ENCODE measurements at regions of chr2 and their contacts with region 1.

Region 1: DNA sequence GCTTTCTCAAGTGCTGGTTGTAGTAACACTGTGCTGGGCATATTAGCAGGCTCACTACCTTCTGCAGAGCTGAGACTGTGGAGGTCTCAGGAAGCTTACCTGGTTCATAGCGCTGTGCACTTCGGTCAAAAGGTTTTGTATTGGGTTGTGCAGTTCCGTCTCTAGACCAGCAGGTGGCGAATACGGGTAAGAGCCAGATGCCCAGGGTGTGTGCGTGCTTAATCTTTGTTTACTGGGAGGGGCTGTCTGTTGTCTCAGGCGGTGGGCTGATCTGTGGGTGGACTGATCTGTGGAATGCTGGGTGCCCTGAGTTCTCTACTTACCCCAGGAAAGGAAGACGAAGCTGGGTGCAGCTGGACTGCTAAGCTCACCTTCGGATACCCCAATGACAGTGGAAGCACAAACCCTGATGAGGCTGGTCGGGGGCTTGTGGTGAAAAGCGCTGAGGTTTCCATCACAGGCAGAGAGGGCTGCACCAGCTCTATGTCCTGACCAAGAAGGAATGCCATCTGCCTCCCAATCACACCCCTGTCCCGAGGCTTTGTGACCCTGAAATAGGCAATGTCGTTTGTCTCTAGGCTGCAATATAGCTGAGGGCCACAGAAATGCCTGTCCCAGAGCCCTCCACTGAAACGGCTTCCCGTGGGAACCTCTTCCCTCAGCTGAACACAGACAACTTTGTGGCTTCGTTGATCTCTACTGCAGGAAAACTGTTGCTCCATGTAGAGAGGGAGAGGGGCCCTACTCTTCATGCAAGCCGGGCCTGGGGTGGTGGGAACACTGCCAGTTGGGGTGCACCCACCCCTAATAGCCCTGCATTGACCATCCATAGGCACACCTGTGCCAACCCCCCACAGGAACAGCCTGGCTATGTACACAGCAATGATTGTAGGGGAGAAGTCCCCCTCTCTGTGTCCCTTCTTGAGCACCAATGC is 45.9 kb upstream of the FAM117B start:
- DNase-seq: peak; percentile 41 to 87 (median 68)
- ATAC-seq: peak; percentile 99
- H3K4me3 ChIP-seq: no peak overlapping the region
- H3K4me3 Mint-ChIP-seq: no peak overlapping the region
- H3K27ac ChIP-seq: no peak overlapping the region
- H3K27ac Mint-ChIP-seq: no peak overlapping the region
- H3K4me1 ChIP-seq: peaks cover 4% of the 10 kb centered on the region
- H3K4me1 Mint-ChIP-seq: peaks cover 11% of the 10 kb centered on the region
- H3K27me3 ChIP-seq: no peaks in the 10 kb centered on the region
- H3K27me3 Mint-ChIP-seq: no peaks in the 10 kb centered on the region
- CTCF ChIP-seq: peak; percentile 80

Region 2: DNA sequence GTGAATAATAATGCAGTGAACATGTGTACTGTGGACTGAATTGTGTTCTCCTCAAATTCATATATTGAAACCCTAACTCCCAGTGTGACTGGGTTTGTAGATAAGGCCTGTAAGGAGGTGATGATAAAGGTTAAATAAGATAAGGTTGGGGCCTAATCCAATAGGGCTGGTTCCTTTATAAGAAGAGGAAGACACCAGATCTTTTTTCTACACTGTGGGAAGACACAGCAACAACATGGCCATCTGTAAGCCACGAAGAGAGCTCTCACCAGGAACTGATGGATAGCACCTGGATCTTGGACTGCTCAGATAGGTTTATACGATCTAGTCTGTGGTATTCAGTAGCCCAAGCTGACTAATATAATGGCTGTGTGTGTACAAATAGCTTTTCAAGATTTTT is 146.0 kb before region 1 on chr2:
- CTCF ChIA-PET with region 1: no interaction called
- POLR2A ChIA-PET with region 1: no interaction called
- intact Hi-C with region 1: no loop called
- DNase-seq: no peak
- ATAC-seq: no peak
- H3K4me3 ChIP-seq: no peak overlapping the region
- H3K4me3 Mint-ChIP-seq: no peak overlapping the region
- H3K27ac ChIP-seq: no peak overlapping the region
- H3K27ac Mint-ChIP-seq: no peak overlapping the region
- H3K4me1 ChIP-seq: no peaks in the 10 kb centered on the region
- H3K4me1 Mint-ChIP-seq: peaks cover 2% of the 10 kb centered on the region
- H3K27me3 ChIP-seq: no peaks in the 10 kb centered on the region
- H3K27me3 Mint-ChIP-seq: no peaks in the 10 kb centered on the region
- CTCF ChIP-seq: no peak

Region 3: DNA sequence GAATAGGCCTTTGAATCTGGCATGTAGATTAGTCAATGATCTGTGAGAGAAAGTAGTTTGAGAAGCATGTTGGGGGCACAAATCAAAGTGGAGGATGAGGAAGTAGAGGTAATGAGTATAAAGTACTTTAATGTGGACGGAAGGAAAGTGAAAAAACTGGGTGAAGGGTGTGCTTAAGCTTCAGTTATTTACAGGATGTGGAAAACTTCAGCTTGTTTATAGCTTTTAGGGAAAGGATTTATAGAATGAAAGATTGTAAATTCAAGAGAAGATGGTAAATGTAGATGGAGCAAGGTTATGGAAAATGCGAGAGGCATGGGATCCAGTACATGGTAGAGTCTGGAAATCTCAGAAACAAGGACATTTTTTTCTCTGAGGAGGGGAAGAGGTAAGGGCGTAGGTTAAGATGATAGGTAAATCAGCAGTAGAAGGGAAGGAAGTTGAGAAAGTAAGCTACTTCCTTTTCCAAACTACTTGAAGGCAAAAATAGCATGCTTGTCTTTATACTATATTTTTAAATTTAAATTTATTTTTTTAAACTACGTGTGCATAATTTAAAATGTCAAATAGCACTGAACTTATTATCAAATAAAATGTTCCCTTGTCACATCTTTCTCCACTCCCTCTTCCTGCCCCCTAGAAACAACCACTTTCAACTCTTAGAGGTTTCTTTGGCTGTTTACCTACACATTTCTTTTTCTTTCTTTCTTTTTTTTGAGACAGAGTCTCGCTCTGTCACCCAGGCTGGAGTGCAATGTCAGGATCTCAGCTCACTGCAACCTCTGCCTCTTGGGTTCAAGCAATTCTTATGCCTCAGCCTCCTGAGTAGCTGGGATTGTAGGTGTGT is 54.3 kb after region 1 on chr2:
- CTCF ChIA-PET with region 1: interaction called, 7 read pairs
- POLR2A ChIA-PET with region 1: no interaction called
- intact Hi-C with region 1: loop called in 1 of 2 experiments (anchors 2 kb)
- DNase-seq: peak in 4 of 9 experiments; percentile 9 to 81 (median 40)
- ATAC-seq: peak; percentile 75
- H3K4me3 ChIP-seq: peak overlapping the region; percentile 2 to 30
- H3K4me3 Mint-ChIP-seq: peak overlapping the region; percentile 76
- H3K27ac ChIP-seq: peak overlapping the region; percentile 38 to 83
- H3K27ac Mint-ChIP-seq: no peak overlapping the region
- H3K4me1 ChIP-seq: peaks cover 75% of the 10 kb centered on the region
- H3K4me1 Mint-ChIP-seq: peaks cover 61% of the 10 kb centered on the region
- H3K27me3 ChIP-seq: no peaks in the 10 kb centered on the region
- H3K27me3 Mint-ChIP-seq: no peaks in the 10 kb centered on the region
- CTCF ChIP-seq: no peak

Region 4: GRCh38 chr2:202762556-202762955 is 173.6 kb after region 1 on chr2:
- CTCF ChIA-PET with region 1: interaction called, 4 read pairs
- POLR2A ChIA-PET with region 1: no interaction called
- intact Hi-C with region 1: loop called (anchors 1 to 5 kb)
- DNase-seq: peak in 3 of 9 experiments; percentile 16 to 73 (median 45)
- ATAC-seq: peak; percentile 82
- H3K4me3 ChIP-seq: peak overlapping the region in 1 of 2 experiments; percentile 25
- H3K4me3 Mint-ChIP-seq: peak overlapping the region; percentile 62
- H3K27ac ChIP-seq: peak overlapping the region; percentile 31 to 33
- H3K27ac Mint-ChIP-seq: peak overlapping the region; percentile 91
- H3K4me1 ChIP-seq: peaks cover 68% of the 10 kb centered on the region
- H3K4me1 Mint-ChIP-seq: peaks cover 44% of the 10 kb centered on the region
- H3K27me3 ChIP-seq: no peaks in the 10 kb centered on the region
- H3K27me3 Mint-ChIP-seq: no peaks in the 10 kb centered on the region
- CTCF ChIP-seq: no peak

Region 5: DNA sequence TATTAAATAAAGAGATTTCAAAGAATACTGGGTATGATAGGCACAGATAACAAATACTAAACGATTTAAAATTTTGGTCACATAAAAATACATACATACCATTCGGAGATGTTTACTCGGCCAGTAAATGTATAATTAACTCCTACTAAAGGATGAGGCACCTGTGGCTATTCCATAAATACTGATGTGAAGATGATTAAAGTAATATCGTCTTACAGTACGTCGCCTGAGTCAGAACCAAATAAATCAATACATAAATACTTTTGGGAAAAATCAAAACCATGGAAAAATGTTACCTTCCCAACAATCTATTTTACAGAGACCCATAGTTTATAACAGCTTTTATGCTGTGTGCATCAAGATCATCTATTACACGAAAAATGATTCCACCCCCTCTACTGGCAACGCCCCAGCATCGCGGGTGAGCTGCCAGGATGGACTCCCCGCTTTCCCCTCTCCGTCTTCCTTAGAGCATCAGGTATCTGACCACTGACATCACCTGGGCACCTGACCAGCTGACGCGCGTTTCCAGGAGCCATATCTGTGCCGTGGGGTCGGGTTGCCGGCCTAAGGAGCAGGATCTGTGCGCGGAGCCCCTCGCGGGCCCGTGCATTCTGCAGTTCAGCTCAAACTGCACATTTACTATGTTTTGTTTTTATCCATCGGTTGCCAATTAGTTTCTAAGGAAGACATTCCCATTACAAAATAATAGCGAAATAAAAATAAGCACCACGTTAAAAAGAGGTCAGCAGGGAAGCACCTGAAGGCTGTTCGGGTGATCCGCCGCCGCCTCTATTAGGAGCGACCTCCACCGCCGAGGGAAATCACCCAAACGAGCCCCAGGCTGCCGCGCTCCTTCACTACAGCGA is 281.8 kb after region 1 on chr2:
- CTCF ChIA-PET with region 1: interaction called, 67 read pairs
- POLR2A ChIA-PET with region 1: no interaction called
- intact Hi-C with region 1: loop called (anchors 1 kb)
- DNase-seq: peak; percentile 31 to 80 (median 63)
- ATAC-seq: peak; percentile 79
- H3K4me3 ChIP-seq: peak overlapping the region; percentile 56 to 97
- H3K4me3 Mint-ChIP-seq: peak overlapping the region; percentile 97
- H3K27ac ChIP-seq: peak overlapping the region; percentile 48 to 60
- H3K27ac Mint-ChIP-seq: peak overlapping the region; percentile 83
- H3K4me1 ChIP-seq: no peaks in the 10 kb centered on the region
- H3K4me1 Mint-ChIP-seq: peaks cover 9% of the 10 kb centered on the region
- H3K27me3 ChIP-seq: no peaks in the 10 kb centered on the region
- H3K27me3 Mint-ChIP-seq: no peaks in the 10 kb centered on the region
- CTCF ChIP-seq: peak; percentile 69

Region 6: GRCh38 chr2:203225423-203226039 is 636.6 kb after region 1 on chr2:
- CTCF ChIA-PET with region 1: no interaction called
- POLR2A ChIA-PET with region 1: no interaction called
- intact Hi-C with region 1: no loop called
- DNase-seq: peak in 7 of 9 experiments; percentile 13 to 64 (median 33)
- ATAC-seq: peak; percentile 87
- H3K4me3 ChIP-seq: no peak overlapping the region
- H3K4me3 Mint-ChIP-seq: no peak overlapping the region
- H3K27ac ChIP-seq: no peak overlapping the region
- H3K27ac Mint-ChIP-seq: no peak overlapping the region
- H3K4me1 ChIP-seq: no peaks in the 10 kb centered on the region
- H3K4me1 Mint-ChIP-seq: no peaks in the 10 kb centered on the region
- H3K27me3 ChIP-seq: no peaks in the 10 kb centered on the region
- H3K27me3 Mint-ChIP-seq: no peaks in the 10 kb centered on the region
- CTCF ChIP-seq: peak; percentile 71